ENCODE measurements at regions of chr19 and their contacts with region 1.

Region 1: GRCh38 chr19:6161271-6161850 is 25.9 kb downstream of the ACSBG2 start:
- DNase-seq: peak; percentile 98
- H3K4me3 ChIP-seq: no peak overlapping the region
- H3K27ac ChIP-seq: no peak overlapping the region
- H3K4me1 ChIP-seq: peaks cover 8% of the 10 kb centered on the region
- CTCF ChIP-seq: no peak

Region 2: DNA sequence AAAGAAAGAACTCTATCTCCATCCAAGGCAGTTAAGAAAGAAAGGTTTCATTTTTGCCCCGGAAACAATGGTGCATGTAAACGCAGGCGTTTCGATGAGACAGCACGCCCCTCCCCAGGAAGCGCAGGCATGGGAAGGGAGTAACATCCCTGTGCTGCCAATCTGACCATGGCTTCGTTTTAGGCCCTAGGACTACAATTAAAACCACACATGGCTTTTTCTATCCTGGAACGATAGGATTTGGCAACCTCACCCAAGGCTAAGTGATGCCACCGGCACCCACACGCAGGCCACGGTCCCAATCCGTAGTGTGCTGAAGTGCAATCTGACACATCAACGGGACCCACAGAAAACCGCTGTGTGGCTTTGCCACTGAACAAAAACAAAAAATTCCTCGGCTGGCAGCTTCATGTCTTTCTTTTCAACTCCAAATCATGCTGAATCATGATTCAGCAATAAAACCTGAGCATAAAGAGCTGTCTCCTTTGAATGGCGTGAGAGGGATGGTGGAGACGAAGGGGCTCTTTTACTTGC is 207.6 kb before region 1 on chr19:
- CTCF ChIA-PET with region 1: no interaction called
- POLR2A ChIA-PET with region 1: no interaction called
- intact Hi-C with region 1: no loop called
- DNase-seq: no peak
- H3K4me3 ChIP-seq: no peak overlapping the region
- H3K27ac ChIP-seq: peak overlapping the region; percentile 96
- H3K4me1 ChIP-seq: peaks cover 81% of the 10 kb centered on the region
- CTCF ChIP-seq: no peak

Region 3: DNA sequence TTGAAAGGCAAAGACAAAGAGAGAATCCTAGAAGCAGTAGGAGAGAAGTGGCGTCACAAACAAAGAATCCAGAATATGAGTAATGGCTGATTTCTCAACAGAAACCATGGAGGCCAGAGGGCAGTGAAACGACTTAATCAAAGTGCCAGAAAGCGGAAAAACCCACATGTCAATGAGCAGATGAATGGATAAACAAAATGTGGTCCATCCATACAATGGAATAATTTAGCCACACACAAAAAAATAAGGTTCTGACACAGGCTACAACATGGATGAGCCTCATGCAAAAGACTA is 131.2 kb before region 1 on chr19:
- CTCF ChIA-PET with region 1: no interaction called
- POLR2A ChIA-PET with region 1: no interaction called
- intact Hi-C with region 1: no loop called
- DNase-seq: no peak
- H3K4me3 ChIP-seq: no peak overlapping the region
- H3K27ac ChIP-seq: no peak overlapping the region
- H3K4me1 ChIP-seq: no peaks in the 10 kb centered on the region
- CTCF ChIP-seq: no peak

Region 4: GRCh38 chr19:6183374-6183773 is 22.0 kb after region 1 on chr19:
- CTCF ChIA-PET with region 1: no interaction called
- POLR2A ChIA-PET with region 1: no interaction called
- intact Hi-C with region 1: no loop called
- DNase-seq: no peak
- H3K4me3 ChIP-seq: no peak overlapping the region
- H3K27ac ChIP-seq: no peak overlapping the region
- H3K4me1 ChIP-seq: no peaks in the 10 kb centered on the region
- CTCF ChIP-seq: no peak

Region 5: DNA sequence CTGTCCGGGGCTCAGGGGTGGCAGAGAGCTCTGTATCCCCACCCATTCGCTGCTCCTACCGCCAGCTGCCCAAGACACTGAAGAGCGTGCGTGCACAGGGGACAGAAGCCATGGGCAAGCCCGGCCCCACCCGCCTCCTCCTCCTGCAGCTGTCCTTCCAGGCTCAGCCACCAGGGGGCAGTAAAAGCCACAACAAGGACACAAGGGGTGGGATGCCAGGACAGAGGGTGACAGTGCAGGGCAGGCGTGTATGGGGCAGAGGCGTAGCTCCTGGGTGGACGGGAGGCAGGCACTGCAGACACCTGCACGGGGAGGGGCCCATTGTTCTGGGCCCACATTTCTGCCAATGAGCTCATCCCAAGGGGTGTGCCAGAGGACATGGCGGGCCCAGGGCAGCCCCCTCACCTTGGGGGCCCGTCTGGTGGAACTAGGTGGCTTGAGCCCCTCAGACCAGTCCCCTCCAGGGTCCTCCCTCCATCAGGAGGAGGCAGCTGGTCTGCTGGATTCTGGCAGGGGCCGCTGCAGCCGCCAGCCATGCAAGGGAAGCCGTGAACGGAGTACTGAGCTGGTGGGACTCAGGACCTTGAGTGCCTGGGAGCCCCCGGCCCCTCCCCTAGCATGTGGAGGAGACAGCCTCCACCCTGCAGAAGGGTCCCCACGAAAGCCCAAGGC is 57.3 kb after region 1 on chr19:
- CTCF ChIA-PET with region 1: no interaction called
- POLR2A ChIA-PET with region 1: no interaction called
- intact Hi-C with region 1: loop called (anchors 1 kb)
- DNase-seq: peak; percentile 83
- H3K4me3 ChIP-seq: no peak overlapping the region
- H3K27ac ChIP-seq: no peak overlapping the region
- H3K4me1 ChIP-seq: no peaks in the 10 kb centered on the region
- CTCF ChIP-seq: peak; percentile 84

Region 6: DNA sequence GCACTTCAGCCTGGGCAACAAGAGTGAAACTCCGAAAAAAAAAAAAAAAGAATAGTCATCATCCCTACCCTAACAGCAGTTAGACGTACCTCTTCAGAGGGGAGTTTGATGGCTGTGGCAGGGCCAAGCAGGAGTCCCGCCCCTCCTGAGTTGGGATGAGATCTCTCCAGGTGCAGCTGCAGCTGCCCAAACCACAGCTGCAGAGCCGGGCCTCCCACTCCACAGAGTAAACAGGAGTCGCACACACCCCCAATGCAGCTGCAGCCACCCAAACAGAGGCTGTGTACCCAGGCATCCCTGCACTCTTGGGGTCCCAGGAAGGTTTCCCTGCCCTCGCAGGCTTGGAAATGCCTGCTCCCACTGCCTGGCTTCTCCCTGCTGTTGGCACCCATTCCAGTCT is 135.8 kb after region 1 on chr19:
- CTCF ChIA-PET with region 1: no interaction called
- POLR2A ChIA-PET with region 1: no interaction called
- intact Hi-C with region 1: loop called (anchors 5 kb)
- DNase-seq: no peak
- H3K4me3 ChIP-seq: no peak overlapping the region
- H3K27ac ChIP-seq: no peak overlapping the region
- H3K4me1 ChIP-seq: no peaks in the 10 kb centered on the region
- CTCF ChIP-seq: no peak

Region 7: GRCh38 chr19:6424939-6425731 is 263.8 kb after region 1 on chr19:
- CTCF ChIA-PET with region 1: no interaction called
- POLR2A ChIA-PET with region 1: no interaction called
- intact Hi-C with region 1: loop called (anchors 10 kb)
- DNase-seq: peak; percentile 100
- H3K4me3 ChIP-seq: peak overlapping the region; percentile 40
- H3K27ac ChIP-seq: peak overlapping the region; percentile 48
- H3K4me1 ChIP-seq: peaks cover 26% of the 10 kb centered on the region
- CTCF ChIP-seq: no peak

Region 8: DNA sequence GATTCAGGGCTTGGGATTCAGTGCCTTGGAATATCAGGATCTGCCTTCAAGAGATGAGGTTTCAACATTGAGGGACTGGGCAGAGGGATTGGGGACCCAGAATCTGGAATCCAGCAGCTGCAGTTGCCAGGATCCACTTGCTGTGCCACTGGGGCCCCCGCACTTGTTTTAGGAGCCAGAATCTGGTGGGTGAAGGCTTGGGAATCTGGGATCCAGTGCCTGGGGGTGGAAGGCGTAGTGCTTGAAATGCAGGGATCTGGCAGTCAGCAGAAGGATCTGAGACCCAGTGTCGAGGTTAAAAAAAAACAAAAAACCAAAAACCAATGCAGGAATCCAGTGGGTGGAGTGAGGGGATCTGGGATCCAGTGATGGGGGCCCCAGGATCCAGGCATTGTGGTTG is 279.5 kb after region 1 on chr19:
- CTCF ChIA-PET with region 1: no interaction called
- POLR2A ChIA-PET with region 1: no interaction called
- intact Hi-C with region 1: no loop called
- DNase-seq: no peak
- H3K4me3 ChIP-seq: no peak overlapping the region
- H3K27ac ChIP-seq: no peak overlapping the region
- H3K4me1 ChIP-seq: no peaks in the 10 kb centered on the region
- CTCF ChIP-seq: no peak

Measured in OCI-LY7 (cell line).